ENCODE measurements at regions of chr7 and their contacts with region 1.

Region 1: GRCh38 chr7:53121374-53121773 is 85.9 kb downstream of the POM121L12 start:
- DNase-seq: peak in 1 of 10 donors; percentile 66

Region 2: DNA sequence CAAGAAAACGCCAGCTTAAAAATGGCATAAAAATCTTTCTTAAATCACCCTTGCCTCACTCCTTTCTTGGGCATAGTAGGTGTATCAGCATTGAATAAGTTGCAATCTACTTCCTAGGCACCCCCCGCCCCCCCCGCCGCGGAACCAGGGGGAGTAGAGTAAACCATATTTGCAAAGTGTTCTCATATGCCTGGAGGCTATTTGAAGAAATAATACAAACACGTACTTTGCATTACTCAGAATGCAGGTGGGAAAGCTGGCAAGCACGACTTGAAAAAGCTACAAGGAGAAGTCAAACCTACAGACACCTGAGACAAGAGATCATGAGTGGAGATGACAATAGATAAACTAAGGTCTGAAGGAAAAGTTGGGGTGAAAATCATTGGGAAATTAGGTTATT is 20.4 kb before region 1 on chr7:
- intact Hi-C with region 1: no loop called
- DNase-seq: no peak

Region 3: GRCh38 chr7:53111031-53111430 is 10.3 kb before region 1 on chr7:
- intact Hi-C with region 1: loop called (anchors 1 kb)
- DNase-seq: no peak

Measured in posterior cingulate gyrus (tissue), 11 donors.